ENCODE measurements at regions of chr2 and their contacts with region 1.

Region 1: GRCh38 chr2:230007931-230008707 is 60.6 kb downstream of the SLC16A14 start:
- DNase-seq: peak; percentile 65
- ATAC-seq: peak; percentile 68
- H3K4me3 ChIP-seq: no peak overlapping the region
- H3K27ac ChIP-seq: no peak overlapping the region
- H3K4me1 ChIP-seq: peaks cover 13% of the 10 kb centered on the region
- H3K27me3 ChIP-seq: no peaks in the 10 kb centered on the region
- CTCF ChIP-seq: peak; percentile 90
- EP300 ChIP-seq: no peak
- POLR2A ChIP-seq: no peak
- RAD21 ChIP-seq: peak; percentile 82; the same call in 1 of the 2 replicates

Region 2: DNA sequence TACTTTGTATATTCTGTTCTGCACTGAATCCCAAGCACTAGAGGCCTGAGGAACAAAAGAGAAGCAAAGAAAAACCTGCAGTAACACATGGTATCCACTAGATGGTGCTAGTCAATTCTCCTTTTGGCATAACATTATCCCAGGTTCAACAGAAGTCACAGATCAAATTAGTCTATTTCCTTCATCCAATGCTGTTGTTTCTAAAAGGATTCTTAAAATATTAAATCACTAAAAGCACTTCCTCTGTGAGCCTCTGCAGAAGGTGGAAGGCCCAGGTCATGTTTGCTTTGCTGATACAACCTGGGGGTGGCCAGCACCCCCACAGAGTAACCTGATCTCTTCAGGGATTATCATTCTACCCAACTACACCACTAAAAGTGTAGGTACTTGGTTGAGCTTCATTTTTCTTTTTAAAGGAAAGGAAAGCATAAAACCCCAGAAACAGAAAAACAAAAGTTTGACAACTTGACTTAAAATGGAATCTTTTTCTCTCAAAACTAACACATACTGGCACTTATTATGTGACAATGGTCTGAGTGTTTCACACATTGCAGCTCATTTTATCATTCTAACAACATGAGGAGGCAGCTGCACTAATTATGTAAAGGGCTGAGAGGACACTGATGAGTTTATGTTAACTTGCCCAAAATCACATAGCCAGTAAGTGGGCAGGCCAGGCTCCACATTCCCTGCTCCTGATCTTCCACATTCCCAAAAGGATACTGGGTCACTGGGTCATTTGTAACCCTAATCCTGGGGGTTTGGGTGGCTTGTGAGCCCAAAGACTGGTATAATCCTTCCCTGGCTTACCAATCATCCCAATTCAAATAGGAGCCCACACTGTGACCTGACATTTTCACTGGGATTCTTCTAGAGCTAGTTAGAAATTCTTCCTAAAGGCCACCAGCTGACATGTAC is 227.0 kb before region 1 on chr2:
- CTCF ChIA-PET with region 1: no interaction called
- POLR2A ChIA-PET with region 1: no interaction called
- in situ Hi-C with region 1: no loop called
- intact Hi-C with region 1: no loop called
- DNase-seq: peak; percentile 43
- ATAC-seq: peak; percentile 91
- H3K4me3 ChIP-seq: no peak overlapping the region
- H3K27ac ChIP-seq: no peak overlapping the region
- H3K4me1 ChIP-seq: no peaks in the 10 kb centered on the region
- H3K27me3 ChIP-seq: no peaks in the 10 kb centered on the region
- CTCF ChIP-seq: peak; percentile 77
- EP300 ChIP-seq: no peak
- POLR2A ChIP-seq: no peak
- RAD21 ChIP-seq: no peak

Region 3: GRCh38 chr2:230068016-230068650 is 60.0 kb after region 1 on chr2:
- CTCF ChIA-PET with region 1: interaction called, 3 read pairs
- POLR2A ChIA-PET with region 1: no interaction called
- in situ Hi-C with region 1: no loop called
- intact Hi-C with region 1: loop called (anchors 2 kb)
- DNase-seq: no peak
- ATAC-seq: peak; percentile 65
- H3K4me3 ChIP-seq: peak overlapping the region; percentile 9 to 61 (median 34); a peak in 5 of 6 replicates
- H3K27ac ChIP-seq: no peak overlapping the region
- H3K4me1 ChIP-seq: peaks cover 19% of the 10 kb centered on the region
- H3K27me3 ChIP-seq: peaks cover 4 to 39% of the 10 kb centered on the region in 2 experiments
- CTCF ChIP-seq: peak; percentile 30
- EP300 ChIP-seq: no peak
- POLR2A ChIP-seq: no peak
- RAD21 ChIP-seq: no peak

Region 4: DNA sequence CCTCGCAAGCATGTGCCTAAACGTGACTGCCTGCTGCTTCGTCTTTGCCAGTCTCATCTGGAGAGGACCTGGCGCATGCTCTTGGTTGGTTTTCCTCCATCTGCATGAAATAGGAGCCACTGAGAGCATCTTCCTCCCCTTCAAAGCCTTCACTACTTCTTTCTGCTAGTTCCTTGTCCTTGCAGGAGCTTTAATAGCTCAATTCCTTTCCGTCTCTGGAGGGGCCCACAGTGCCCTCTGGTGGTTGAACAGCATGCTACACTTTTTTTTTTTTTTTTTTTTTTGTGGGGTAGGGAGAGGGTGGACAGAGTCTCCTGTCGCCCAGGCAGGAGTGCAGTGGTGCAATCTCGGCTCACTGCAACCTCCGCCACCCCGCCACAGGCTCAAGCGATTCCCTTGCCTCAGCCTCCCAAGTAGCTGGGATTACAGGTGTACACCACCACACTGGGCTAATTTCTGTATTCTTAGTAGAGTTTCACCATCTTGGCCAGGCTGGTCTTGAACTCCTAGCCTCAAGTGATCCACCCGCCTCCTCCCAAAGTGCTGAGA is 152.1 kb after region 1 on chr2:
- CTCF ChIA-PET with region 1: interaction called, 41 read pairs
- POLR2A ChIA-PET with region 1: no interaction called
- in situ Hi-C with region 1: loop called (anchors 5 kb)
- intact Hi-C with region 1: loop called (anchors 1 kb)
- DNase-seq: peak; percentile 37
- ATAC-seq: peak; percentile 79
- H3K4me3 ChIP-seq: no peak overlapping the region
- H3K27ac ChIP-seq: no peak overlapping the region
- H3K4me1 ChIP-seq: no peaks in the 10 kb centered on the region
- H3K27me3 ChIP-seq: peaks cover 2 to 17% of the 10 kb centered on the region in 2 experiments; a peak in 3 of 5 replicates
- CTCF ChIP-seq: peak; percentile 83
- EP300 ChIP-seq: no peak
- POLR2A ChIP-seq: no peak
- RAD21 ChIP-seq: peak; percentile 55

Region 5: DNA sequence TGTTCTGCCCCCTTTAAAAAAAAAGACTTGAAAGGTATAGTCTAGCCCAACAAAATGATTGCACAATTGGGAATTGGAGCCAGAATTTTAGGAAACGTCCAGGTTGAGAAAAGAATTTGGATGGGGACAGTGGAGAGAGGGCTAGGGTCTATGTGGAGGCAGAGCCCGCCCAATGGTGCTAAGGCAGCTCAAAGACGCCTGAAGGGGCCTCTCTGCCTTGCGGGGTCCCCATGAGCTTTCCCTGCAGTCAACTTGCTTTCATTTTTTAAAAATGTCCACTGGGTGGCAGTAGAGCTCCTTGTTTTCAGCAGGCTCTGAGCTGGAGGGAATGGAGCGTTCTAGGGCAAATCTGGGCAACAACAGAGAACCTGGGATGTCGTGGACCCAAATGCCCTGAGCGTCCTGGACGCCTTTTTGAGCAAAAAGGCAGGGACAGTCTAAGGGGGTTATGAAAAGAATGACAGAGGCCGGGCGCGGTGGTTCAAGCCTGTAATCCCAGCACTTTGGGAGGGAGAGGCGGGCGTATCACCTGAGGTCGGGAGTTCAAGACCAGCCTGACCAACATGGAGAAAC is 816.4 kb after region 1 on chr2:
- CTCF ChIA-PET with region 1: no interaction called
- POLR2A ChIA-PET with region 1: no interaction called
- in situ Hi-C with region 1: loop called (anchors 25 kb)
- intact Hi-C with region 1: no loop called
- DNase-seq: peak; percentile 87
- ATAC-seq: peak; percentile 91
- H3K4me3 ChIP-seq: peak overlapping the region in 2 of 3 experiments; percentile 28 to 36; a peak in 2 of 6 replicates
- H3K27ac ChIP-seq: no peak overlapping the region
- H3K4me1 ChIP-seq: no peaks in the 10 kb centered on the region
- H3K27me3 ChIP-seq: peaks cover 2 to 24% of the 10 kb centered on the region in 2 experiments; a peak in 4 of 5 replicates
- CTCF ChIP-seq: peak; percentile 89
- EP300 ChIP-seq: no peak
- POLR2A ChIP-seq: no peak
- RAD21 ChIP-seq: peak; percentile 81